A549 (cell line): ENCODE measurements at regions of chr15 and their contacts with region 1.

Region 1: GRCh38 chr15:78750566-78750965 is 60.7 kb downstream of the ADAMTS7 start:
- DNase-seq: no peak
- ATAC-seq: peak; percentile 26 to 40
- H3K4me3 ChIP-seq: peak overlapping the region; percentile 32; the same call in 1 of the 3 replicates
- H3K27ac ChIP-seq: peak overlapping the region; percentile 26 to 60; a peak in 3 of 6 replicates
- H3K4me1 ChIP-seq: peaks cover 15% of the 10 kb centered on the region
- CTCF ChIP-seq: no peak
- EP300 ChIP-seq: no peak
- POLR2A ChIP-seq: no peak
- RAD21 ChIP-seq: no peak

Region 2: DNA sequence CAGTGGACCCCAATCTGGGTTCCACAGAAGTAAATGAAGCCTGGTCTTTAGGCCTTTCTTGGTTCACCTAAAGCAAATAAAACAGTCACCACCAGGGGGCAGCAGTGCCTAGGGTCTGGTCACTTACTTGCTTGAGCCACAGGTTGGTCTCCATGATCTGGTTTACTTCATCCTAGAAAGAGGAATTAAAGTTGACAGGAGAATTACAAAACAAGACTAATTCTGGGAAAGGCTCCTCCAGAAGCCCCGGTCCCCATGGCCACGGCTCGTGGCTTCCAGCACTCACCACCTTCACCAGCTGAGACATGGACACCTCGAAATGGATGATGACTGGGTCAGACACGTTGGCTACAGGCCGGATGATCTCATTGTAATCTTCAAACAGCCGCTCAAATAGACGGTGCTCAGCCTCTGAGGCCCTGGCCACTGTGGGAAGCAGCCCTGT is 132.1 kb before region 1 on chr15:
- CTCF ChIA-PET with region 1: interaction called, 29 read pairs
- POLR2A ChIA-PET with region 1: no interaction called
- DNase-seq: peak; percentile 89 to 96
- ATAC-seq: peak; percentile 77 to 78
- H3K4me3 ChIP-seq: no peak overlapping the region
- H3K27ac ChIP-seq: no peak overlapping the region
- H3K4me1 ChIP-seq: peaks cover 14% of the 10 kb centered on the region; the same call in 2 of the 3 replicates
- CTCF ChIP-seq: peak; percentile 97
- EP300 ChIP-seq: no peak
- POLR2A ChIP-seq: no peak
- RAD21 ChIP-seq: peak; percentile 92 to 96

Region 3: GRCh38 chr15:78625606-78626280 is 124.8 kb before region 1 on chr15:
- CTCF ChIA-PET with region 1: interaction called, 15 read pairs
- POLR2A ChIA-PET with region 1: no interaction called
- DNase-seq: no peak
- ATAC-seq: peak in 1 of 2 experiments; percentile 7; a peak in 1 of 6 replicates
- H3K4me3 ChIP-seq: no peak overlapping the region
- H3K27ac ChIP-seq: no peak overlapping the region
- H3K4me1 ChIP-seq: 0 out of 3 replicates have a peak, but pooled peaks cover 3% of the 10 kb centered on the region
- CTCF ChIP-seq: no peak
- EP300 ChIP-seq: no peak
- POLR2A ChIP-seq: no peak
- RAD21 ChIP-seq: no peak

Region 4: DNA sequence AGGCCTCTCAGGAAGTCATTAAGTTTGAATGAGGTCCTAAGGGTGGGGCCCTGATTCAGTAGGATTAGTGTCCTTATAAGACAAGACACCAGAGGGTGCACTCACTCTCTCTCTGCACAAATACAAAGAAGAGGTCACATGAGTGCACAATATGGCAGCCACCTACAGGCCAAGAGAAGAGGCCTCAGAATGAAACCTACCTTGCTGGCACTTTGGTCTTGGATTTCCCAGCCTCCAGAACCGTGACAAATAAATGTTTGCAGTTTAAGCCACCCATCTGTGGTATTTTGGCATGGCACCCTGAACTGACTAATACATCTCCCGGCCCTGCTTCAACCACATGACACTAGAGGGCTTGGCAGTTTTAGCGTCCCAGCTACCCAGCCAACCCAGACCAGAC is 35.7 kb before region 1 on chr15:
- CTCF ChIA-PET with region 1: interaction called, 12 read pairs
- POLR2A ChIA-PET with region 1: no interaction called
- DNase-seq: peak in 1 of 2 experiments; percentile 79
- ATAC-seq: peak in 1 of 2 experiments; percentile 75; a peak in 3 of 6 replicates
- H3K4me3 ChIP-seq: no peak overlapping the region
- H3K27ac ChIP-seq: peak overlapping the region in 1 of 2 experiments; percentile 62; a peak in 3 of 6 replicates
- H3K4me1 ChIP-seq: peaks cover 24% of the 10 kb centered on the region
- CTCF ChIP-seq: peak; percentile 19; the same call in 2 of the 3 replicates
- EP300 ChIP-seq: no peak
- POLR2A ChIP-seq: no peak
- RAD21 ChIP-seq: peak; percentile 24 to 61; a peak in 2 of 5 replicates

Region 5: DNA sequence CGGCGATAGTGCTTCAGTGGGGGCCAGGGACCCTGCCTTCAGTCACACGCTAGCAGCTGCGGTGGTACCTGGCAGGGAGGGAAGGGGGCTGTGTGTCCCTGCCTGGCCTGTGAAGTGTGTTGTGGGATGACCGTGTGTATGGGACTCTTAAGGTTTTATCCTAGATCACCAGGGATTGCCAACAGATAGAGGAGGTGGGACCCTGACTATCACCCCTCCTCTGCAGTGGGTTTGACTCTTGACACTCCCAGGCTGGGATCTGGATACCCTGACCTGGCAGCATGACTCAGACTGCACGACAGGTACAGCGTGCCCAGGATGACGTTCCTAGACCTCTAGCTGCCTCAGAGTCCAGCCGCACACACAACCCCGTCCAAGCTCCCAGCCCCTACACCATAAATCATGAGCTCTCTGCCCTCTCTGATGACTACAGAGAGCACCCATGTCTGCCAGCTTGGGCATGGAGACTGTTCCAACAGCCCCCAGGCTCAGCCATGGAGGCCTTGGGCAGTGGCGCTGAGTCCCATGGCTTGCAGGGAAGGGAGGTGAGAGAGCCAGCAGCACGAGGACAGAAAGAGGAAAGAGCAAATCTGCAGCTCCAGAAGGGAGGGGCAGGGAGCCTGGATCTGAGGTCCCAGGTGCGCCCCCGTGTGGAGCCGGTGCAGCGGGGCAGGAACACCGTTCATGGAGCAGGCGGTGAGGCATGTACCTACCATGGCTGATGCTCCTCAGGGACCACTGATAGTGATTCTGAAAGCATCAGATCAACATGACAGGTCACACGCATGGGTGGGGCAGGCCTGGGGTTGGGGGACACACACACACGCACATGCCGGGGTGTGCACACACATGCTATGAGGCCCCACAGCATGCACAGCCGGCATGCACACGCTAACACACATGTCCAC is 10.3 kb before region 1 on chr15:
- CTCF ChIA-PET with region 1: interaction called, 47 read pairs
- POLR2A ChIA-PET with region 1: no interaction called
- DNase-seq: peak in 1 of 2 experiments; percentile 88
- ATAC-seq: peak; percentile 84 to 97
- H3K4me3 ChIP-seq: no peak overlapping the region
- H3K27ac ChIP-seq: peak overlapping the region; percentile 65 to 80
- H3K4me1 ChIP-seq: peaks cover 4% of the 10 kb centered on the region
- CTCF ChIP-seq: peak; percentile 69
- EP300 ChIP-seq: no peak
- POLR2A ChIP-seq: no peak
- RAD21 ChIP-seq: peak; percentile 60 to 67

Region 6: DNA sequence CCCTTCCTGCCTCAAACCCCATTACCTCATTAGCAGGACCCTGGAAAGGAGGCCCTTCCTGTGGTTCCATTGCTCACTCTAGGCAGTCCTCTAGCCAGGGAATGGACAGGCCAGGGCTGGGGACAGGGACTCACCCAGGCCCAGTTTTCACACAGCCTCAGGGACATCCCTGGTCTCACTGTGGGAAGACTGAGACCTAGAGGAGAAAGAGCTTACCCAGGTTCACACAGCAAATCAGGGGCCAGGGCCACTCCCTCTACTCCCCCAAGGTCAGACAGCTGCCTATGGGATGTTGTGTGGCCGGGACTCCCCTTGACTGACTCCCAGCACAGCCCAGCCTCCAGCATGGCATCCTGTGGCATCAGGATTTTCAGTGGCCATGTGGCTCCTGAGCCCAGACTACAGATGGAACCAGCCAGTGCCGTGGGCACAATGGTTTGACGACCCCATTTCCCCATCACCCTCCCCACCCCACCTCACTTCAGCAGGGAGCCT is 11.4 kb after region 1 on chr15:
- CTCF ChIA-PET with region 1: interaction called, 15 read pairs
- POLR2A ChIA-PET with region 1: no interaction called
- DNase-seq: no peak
- ATAC-seq: no peak
- H3K4me3 ChIP-seq: no peak overlapping the region
- H3K27ac ChIP-seq: no peak overlapping the region
- H3K4me1 ChIP-seq: peaks cover 1% of the 10 kb centered on the region; the same call in 2 of the 3 replicates
- CTCF ChIP-seq: no peak
- EP300 ChIP-seq: no peak
- POLR2A ChIP-seq: no peak
- RAD21 ChIP-seq: no peak

Region 7: DNA sequence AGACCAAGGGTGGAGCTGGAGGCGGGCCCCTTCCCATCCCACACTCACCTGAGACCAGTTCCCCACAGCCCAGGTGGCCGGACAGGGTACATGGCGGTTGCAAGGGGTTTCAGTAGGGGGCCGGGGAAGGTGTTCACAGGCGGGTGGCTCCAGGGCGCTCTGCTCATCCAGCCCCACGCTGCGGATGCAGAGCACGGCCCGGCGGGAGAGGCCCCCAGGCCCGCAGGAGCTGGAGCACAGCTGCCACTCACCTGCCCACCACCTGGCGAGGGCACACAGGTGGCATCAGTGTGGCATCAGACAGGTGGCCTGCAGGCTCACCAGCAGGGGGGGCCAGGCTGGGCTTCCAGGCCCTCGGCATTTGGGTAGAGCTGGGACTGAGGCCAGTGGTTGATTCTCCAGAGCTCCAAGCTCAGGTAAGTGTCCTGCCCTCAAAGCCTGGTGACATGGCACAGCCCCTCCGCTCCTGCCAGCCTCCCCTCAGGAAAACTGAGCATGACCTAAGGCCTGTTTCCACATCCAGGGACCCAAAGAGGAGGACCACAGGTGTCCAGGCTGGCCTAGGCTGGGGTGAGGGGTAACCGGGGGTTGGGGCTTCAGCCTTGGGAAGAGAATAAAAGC is 16.9 kb after region 1 on chr15:
- CTCF ChIA-PET with region 1: interaction called, 15 read pairs
- POLR2A ChIA-PET with region 1: no interaction called
- DNase-seq: no peak
- ATAC-seq: peak in 1 of 2 experiments; percentile 11; a peak in 1 of 6 replicates
- H3K4me3 ChIP-seq: no peak overlapping the region
- H3K27ac ChIP-seq: no peak overlapping the region
- H3K4me1 ChIP-seq: no peaks in the 10 kb centered on the region
- CTCF ChIP-seq: no peak
- EP300 ChIP-seq: no peak
- POLR2A ChIP-seq: no peak
- RAD21 ChIP-seq: no peak